MCF 10A (cell line): ENCODE measurements at regions of chr12 and their contacts with region 1.

Region 1: DNA sequence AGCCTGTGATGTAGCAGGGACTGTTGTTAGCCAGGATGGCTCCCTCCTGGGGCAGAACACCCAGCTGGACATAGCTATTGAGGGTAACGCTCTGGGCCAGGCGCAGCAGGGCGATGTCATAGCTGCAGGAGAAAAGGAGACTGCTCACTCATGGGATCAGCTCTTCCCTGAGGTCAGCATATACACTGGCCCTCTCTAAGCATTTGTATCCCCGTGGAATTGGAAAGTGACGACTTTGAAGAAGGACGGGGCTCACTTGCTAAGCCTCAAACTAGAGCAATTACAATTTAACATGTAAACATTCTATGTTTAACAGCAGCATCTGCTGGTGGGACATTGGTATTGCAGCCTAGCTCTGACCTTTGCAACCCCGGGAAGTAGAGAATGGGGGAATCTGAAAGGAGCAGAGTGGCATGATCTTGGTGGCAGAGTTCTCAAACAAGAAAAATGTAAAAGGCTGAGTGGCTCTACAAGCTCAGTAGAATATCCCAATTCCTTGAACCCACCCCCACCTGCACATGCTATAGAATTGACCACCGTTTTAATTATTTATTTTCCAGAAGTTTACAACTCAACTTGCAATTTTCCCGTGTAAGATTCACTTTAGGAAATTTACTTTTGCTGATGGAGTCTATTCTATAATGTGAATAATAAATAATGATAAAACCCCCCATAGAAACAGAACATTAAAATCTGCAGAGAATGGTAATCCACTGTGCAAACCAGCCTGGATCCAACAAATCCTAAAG is 5.0 kb downstream of the CELA1 start:
- DNase-seq: peak; percentile 76
- H3K4me3 Mint-ChIP-seq: no peak overlapping the region
- H3K27ac Mint-ChIP-seq: no peak overlapping the region
- H3K4me1 Mint-ChIP-seq: peaks cover 4% of the 10 kb centered on the region
- H3K27me3 Mint-ChIP-seq: no peaks in the 10 kb centered on the region
- CTCF ChIP-seq: peak; percentile 97

Region 2: DNA sequence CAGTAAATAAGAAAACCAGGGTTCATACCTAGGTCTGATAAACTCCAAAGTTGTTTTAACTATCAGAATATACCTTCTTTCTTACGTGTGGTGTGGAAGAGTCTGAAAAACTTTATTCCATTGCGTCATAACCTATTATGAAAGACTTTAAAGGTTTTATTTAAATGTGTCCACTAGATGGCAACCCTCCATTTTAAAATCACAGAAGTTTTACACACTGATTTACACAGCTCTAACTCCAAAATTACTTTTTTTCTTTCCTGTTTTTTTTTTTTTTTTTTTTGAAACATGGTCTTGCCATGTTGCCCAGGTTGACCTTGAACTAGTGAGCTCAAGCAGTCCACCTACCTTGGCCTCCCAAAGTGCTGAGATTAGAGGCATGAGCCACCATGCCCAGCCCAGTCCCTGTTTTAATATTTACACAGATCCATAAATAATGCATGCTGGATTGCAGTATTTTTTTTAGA is 516.0 kb before region 1 on chr12:
- CTCF ChIA-PET with region 1: interaction called, 4 read pairs
- POLR2A ChIA-PET with region 1: interaction called, 3 read pairs
- intact Hi-C with region 1: loop called (anchors 1 kb)
- DNase-seq: peak; percentile 73
- H3K4me3 Mint-ChIP-seq: no peak overlapping the region
- H3K27ac Mint-ChIP-seq: peak overlapping the region; percentile 11
- H3K4me1 Mint-ChIP-seq: peaks cover 18% of the 10 kb centered on the region
- H3K27me3 Mint-ChIP-seq: no peaks in the 10 kb centered on the region
- CTCF ChIP-seq: peak; percentile 25

Region 3: GRCh38 chr12:51047655-51048540 is 293.5 kb before region 1 on chr12 and contains the start of gene LETMD1:
- CTCF ChIA-PET with region 1: interaction called, 4 read pairs
- POLR2A ChIA-PET with region 1: interaction called, 3 read pairs
- intact Hi-C with region 1: loop called (anchors 1 kb)
- DNase-seq: peak; percentile 99
- H3K4me3 Mint-ChIP-seq: peak within 1 kb of the TSS; percentile 94
- H3K27ac Mint-ChIP-seq: peak within 1 kb of the TSS; percentile 93
- H3K4me1 Mint-ChIP-seq: peaks cover 7% of the 10 kb centered on the region
- H3K27me3 Mint-ChIP-seq: no peaks in the 10 kb centered on the region
- CTCF ChIP-seq: peak; percentile 90
- total RNA-seq, gene LETMD1: 60.5 and 65.8 TPM in 2 replicates

Region 4: GRCh38 chr12:51262758-51263177 is 78.7 kb before region 1 on chr12:
- CTCF ChIA-PET with region 1: interaction called, 110 read pairs
- POLR2A ChIA-PET with region 1: interaction called, 3 read pairs
- intact Hi-C with region 1: no loop called
- DNase-seq: peak; percentile 55
- H3K4me3 Mint-ChIP-seq: no peak overlapping the region
- H3K27ac Mint-ChIP-seq: no peak overlapping the region
- H3K4me1 Mint-ChIP-seq: peaks cover 9% of the 10 kb centered on the region
- H3K27me3 Mint-ChIP-seq: no peaks in the 10 kb centered on the region
- CTCF ChIP-seq: peak; percentile 9

Region 5: DNA sequence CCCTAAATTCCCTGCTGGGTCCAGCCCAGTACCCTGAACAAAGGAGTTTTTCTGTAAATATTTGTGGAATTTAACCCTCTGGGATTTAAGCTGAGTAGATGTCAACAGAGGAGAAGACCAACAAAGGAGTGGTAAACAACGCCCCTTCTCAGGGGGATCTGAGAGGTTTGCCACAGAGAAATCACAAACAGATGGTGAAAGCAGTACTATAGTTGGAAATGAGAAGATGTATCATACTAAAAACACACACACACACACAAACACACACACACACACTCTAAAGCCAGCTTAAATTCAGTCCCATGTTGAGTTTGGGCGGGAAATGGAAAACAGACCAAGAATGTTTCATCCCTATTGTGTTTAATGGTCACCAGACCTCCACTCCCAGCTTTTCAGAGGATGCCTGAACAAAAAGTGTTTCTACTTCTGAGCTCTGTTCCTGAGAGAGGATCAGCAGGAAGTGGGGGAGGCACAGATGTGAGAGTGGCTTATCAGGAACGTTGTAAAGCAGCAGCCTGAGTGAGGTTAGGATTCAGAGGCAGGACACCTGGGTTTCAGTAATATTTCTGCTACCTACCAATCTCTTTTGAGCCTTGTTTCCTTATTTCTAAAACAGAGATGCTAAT is 20.6 kb before region 1 on chr12:
- CTCF ChIA-PET with region 1: interaction called, 10 read pairs
- POLR2A ChIA-PET with region 1: interaction called, 3 read pairs
- intact Hi-C with region 1: no loop called
- DNase-seq: no peak
- H3K4me3 Mint-ChIP-seq: no peak overlapping the region
- H3K27ac Mint-ChIP-seq: no peak overlapping the region
- H3K4me1 Mint-ChIP-seq: peaks cover 18% of the 10 kb centered on the region
- H3K27me3 Mint-ChIP-seq: no peaks in the 10 kb centered on the region
- CTCF ChIP-seq: no peak

Region 6: GRCh38 chr12:51351913-51352532 is 10.6 kb after region 1 on chr12:
- CTCF ChIA-PET with region 1: interaction called, 27 read pairs
- POLR2A ChIA-PET with region 1: interaction called, 3 read pairs
- intact Hi-C with region 1: no loop called
- DNase-seq: peak; percentile 59
- H3K4me3 Mint-ChIP-seq: no peak overlapping the region
- H3K27ac Mint-ChIP-seq: no peak overlapping the region
- H3K4me1 Mint-ChIP-seq: no peaks in the 10 kb centered on the region
- H3K27me3 Mint-ChIP-seq: no peaks in the 10 kb centered on the region
- CTCF ChIP-seq: peak; percentile 37